CD14-positive monocyte (primary cell): ENCODE measurements at regions of chr11 and their contacts with region 1.

Region 1: DNA sequence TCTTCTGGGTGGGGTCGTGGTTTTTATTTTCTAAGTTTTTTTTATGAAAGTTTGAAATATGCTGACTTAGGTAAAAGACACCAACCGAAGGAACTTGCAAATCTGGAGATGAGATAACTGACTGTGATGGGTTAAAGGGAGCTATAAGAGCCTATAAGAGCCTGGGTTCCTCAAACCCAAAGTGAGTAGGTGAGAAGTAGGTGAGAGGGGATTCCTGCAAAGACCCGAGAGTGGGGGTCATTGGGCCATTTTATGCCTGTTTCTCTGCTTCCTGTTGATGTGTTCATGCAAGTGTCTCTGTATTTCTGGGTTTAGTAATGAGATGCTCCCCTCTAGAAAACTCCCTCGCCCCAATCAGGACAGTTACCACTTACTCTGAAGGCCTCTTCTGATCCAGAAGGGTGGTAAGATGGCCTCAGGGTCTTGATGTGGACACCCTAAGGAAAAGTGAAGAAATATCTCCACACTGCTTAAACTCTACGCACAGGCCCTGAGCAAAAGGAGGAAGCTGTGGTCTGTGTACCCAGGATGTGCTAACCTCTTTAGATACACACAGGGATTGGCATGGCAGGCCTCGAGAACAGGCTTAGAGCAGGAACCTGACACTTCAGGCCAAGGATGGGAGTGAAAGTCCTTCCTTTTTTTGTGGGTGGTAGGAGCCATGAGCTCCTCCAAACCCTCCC is 1.8 kb downstream of the FLI1 start:
- DNase-seq: peak; percentile 93 to 98 (median 97)
- H3K4me3 ChIP-seq: peak overlapping the region; percentile 93 to 96 (median 95)
- H3K4me3 Mint-ChIP-seq: peak overlapping the region; percentile 95 to 96
- H3K27ac ChIP-seq: peak overlapping the region; percentile 84 to 92
- H3K27ac Mint-ChIP-seq: peak overlapping the region; percentile 91 to 98 (median 97)
- H3K4me1 ChIP-seq: peaks cover 64 to 76% of the 10 kb centered on the region in 2 donors
- H3K4me1 Mint-ChIP-seq: peaks cover 69% of the 10 kb centered on the region
- H3K27me3 ChIP-seq: no peaks in the 10 kb centered on the region
- H3K27me3 Mint-ChIP-seq: peaks cover 5 to 17% (median 11%) of the 10 kb centered on the region in 3 donors
- CTCF ChIP-seq: no peak

Region 2: GRCh38 chr11:128653801-128654231 is 41.9 kb before region 1 on chr11:
- intact Hi-C with region 1: loop called (anchors 5 kb)
- DNase-seq: peak in 2 of 3 donors; percentile 57 to 61
- H3K4me3 ChIP-seq: peak overlapping the region; percentile 23 to 73 (median 51)
- H3K4me3 Mint-ChIP-seq: peak overlapping the region; percentile 81 to 93
- H3K27ac ChIP-seq: peak overlapping the region; percentile 0 to 59
- H3K27ac Mint-ChIP-seq: peak overlapping the region; percentile 15 to 85 (median 69)
- H3K4me1 ChIP-seq: peaks cover 18 to 24% of the 10 kb centered on the region in 2 donors
- H3K4me1 Mint-ChIP-seq: peaks cover 24% of the 10 kb centered on the region
- H3K27me3 ChIP-seq: no peaks in the 10 kb centered on the region
- H3K27me3 Mint-ChIP-seq: peaks cover 0 to 4% (median 3%) of the 10 kb centered on the region in 3 donors
- CTCF ChIP-seq: no peak

Region 3: GRCh38 chr11:128707681-128708080 is 12.0 kb after region 1 on chr11:
- intact Hi-C with region 1: no loop called
- DNase-seq: peak in 2 of 3 donors; percentile 45
- H3K4me3 ChIP-seq: no peak overlapping the region
- H3K4me3 Mint-ChIP-seq: no peak overlapping the region
- H3K27ac ChIP-seq: peak overlapping the region in 1 of 2 donors; percentile 94
- H3K27ac Mint-ChIP-seq: peak overlapping the region in 6 of 7 donors; percentile 66 to 90 (median 78)
- H3K4me1 ChIP-seq: peaks cover 76 to 91% of the 10 kb centered on the region in 2 donors
- H3K4me1 Mint-ChIP-seq: peaks cover 92% of the 10 kb centered on the region
- H3K27me3 ChIP-seq: no peaks in the 10 kb centered on the region
- H3K27me3 Mint-ChIP-seq: peaks cover 0 to 2% (median 0%) of the 10 kb centered on the region in 3 donors
- CTCF ChIP-seq: no peak

Region 4: GRCh38 chr11:128718064-128718463 is 22.4 kb after region 1 on chr11:
- intact Hi-C with region 1: loop called in 1 of 2 experiments (anchors 2 kb)
- DNase-seq: no peak
- H3K4me3 ChIP-seq: peak overlapping the region in 1 of 3 experiments; percentile 71
- H3K4me3 Mint-ChIP-seq: peak overlapping the region; percentile 39 to 88
- H3K27ac ChIP-seq: peak overlapping the region; percentile 92 to 94
- H3K27ac Mint-ChIP-seq: peak overlapping the region; percentile 96 to 100 (median 99)
- H3K4me1 ChIP-seq: peaks cover 100% of the 10 kb centered on the region in 2 donors
- H3K4me1 Mint-ChIP-seq: peaks cover 100% of the 10 kb centered on the region
- H3K27me3 ChIP-seq: no peaks in the 10 kb centered on the region
- H3K27me3 Mint-ChIP-seq: peaks cover 0 to 1% (median 0%) of the 10 kb centered on the region in 3 donors
- CTCF ChIP-seq: no peak

Region 5: DNA sequence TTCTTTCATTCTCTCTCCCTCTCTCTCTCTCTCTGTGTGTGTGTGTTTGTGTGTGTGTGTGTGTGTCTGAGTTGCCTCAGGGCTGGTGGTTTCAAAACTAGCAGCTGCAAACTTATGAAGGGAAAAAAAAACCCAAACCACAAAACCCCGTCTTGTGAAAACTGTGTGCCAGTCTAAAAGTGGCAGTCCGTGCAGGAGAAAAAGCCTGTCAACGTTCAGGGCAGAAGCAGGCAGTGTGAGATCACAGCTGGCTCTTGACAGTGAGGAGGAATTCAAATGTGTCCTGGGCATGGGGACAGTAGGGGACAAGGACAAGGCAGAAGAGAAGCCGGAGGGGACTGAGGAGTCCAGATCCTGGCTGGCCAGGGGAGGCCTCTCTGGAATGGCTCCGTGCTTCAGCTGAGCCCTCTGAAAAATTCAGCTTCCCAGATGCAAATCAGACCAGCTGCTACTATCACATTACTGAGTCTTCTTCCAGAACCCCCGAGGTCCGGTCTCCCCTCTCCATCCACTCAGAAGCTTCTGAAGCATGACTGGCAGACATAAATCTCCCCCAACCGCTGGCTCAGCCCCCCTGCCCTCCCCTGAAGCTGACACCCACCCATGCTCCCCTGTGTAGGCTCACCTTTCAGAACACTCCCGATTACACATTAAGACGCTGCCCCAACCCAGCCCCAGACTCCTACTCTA is 30.1 kb after region 1 on chr11:
- intact Hi-C with region 1: loop called in 1 of 2 experiments (anchors 5 kb)
- DNase-seq: peak; percentile 65 to 70 (median 67)
- H3K4me3 ChIP-seq: peak overlapping the region; percentile 5 to 73 (median 27)
- H3K4me3 Mint-ChIP-seq: peak overlapping the region; percentile 56 to 91
- H3K27ac ChIP-seq: peak overlapping the region; percentile 92 to 94
- H3K27ac Mint-ChIP-seq: peak overlapping the region; percentile 94 to 99 (median 97)
- H3K4me1 ChIP-seq: peaks cover 100% of the 10 kb centered on the region in 2 donors
- H3K4me1 Mint-ChIP-seq: peaks cover 99% of the 10 kb centered on the region
- H3K27me3 ChIP-seq: no peaks in the 10 kb centered on the region
- H3K27me3 Mint-ChIP-seq: peaks cover 0 to 7% (median 0%) of the 10 kb centered on the region in 3 donors
- CTCF ChIP-seq: no peak

Region 6: DNA sequence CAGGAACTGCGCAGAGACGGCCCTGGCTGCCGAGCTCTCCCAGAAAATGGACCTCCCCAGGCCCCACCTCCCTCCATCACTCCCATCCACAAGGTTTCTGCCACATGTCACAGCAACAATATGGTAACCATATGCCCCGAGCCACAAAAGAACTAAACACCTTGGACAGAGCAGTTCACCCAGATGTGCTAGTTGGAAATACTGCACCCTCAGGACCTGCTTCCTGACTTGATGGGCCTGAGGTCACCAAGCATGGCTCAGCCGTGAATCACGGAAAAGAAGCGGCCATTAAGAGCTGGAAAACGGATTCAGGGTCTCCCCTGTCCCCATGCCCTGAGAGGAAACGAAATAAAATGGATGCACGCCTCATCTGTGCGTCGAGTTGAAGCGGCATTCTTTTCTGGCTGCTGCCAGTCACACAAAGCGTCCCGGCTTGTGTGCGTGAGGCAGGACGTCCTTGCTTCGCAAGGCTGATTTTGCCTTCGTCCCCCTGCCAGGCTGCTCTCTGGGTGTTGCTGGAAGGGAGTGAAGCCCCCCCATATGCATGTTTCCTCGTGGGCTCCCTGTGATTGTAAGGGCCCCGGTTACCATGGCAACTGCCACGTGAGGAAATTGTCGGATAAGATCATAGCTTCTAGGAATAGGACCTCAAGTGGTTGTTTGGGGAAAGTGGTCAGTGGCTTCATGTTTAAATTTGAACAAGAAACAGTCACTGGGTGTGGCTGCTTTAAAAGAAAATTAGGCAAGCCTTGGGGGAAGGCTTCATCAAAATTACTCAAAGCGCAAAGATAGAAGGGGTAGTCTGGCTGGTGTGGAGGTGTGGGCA is 49.8 kb after region 1 on chr11:
- intact Hi-C with region 1: loop called in 1 of 2 experiments (anchors 10 kb)
- DNase-seq: peak; percentile 56 to 58 (median 58)
- H3K4me3 ChIP-seq: peak overlapping the region in 1 of 3 experiments; percentile 3
- H3K4me3 Mint-ChIP-seq: peak overlapping the region in 1 of 2 donors; percentile 22
- H3K27ac ChIP-seq: peak overlapping the region; percentile 65 to 79
- H3K27ac Mint-ChIP-seq: peak overlapping the region; percentile 82 to 96 (median 91)
- H3K4me1 ChIP-seq: peaks cover 51 to 68% of the 10 kb centered on the region in 2 donors
- H3K4me1 Mint-ChIP-seq: peaks cover 73% of the 10 kb centered on the region
- H3K27me3 ChIP-seq: no peaks in the 10 kb centered on the region
- H3K27me3 Mint-ChIP-seq: no peaks in the 10 kb centered on the region
- CTCF ChIP-seq: peak; percentile 25